ENCODE measurements at regions of chr7 and their contacts with region 1.

Region 1: GRCh38 chr7:65006094-65006992 is at the start of gene ERV3-1:
- DNase-seq: peak; percentile 81 to 96
- ATAC-seq: peak; percentile 100
- H3K4me3 ChIP-seq: peak within 1 kb of the TSS; percentile 74
- H3K27ac ChIP-seq: peak within 1 kb of the TSS; percentile 83 to 92
- H3K4me1 ChIP-seq: no peaks in the 10 kb centered on the region
- CTCF ChIP-seq: no peak
- EP300 ChIP-seq: no peak
- POLR2A ChIP-seq: peak; percentile 76
- RAD21 ChIP-seq: no peak
- polyA plus RNA-seq, gene ERV3-1: 5.7 and 5.8 TPM in 2 replicates

Region 2: DNA sequence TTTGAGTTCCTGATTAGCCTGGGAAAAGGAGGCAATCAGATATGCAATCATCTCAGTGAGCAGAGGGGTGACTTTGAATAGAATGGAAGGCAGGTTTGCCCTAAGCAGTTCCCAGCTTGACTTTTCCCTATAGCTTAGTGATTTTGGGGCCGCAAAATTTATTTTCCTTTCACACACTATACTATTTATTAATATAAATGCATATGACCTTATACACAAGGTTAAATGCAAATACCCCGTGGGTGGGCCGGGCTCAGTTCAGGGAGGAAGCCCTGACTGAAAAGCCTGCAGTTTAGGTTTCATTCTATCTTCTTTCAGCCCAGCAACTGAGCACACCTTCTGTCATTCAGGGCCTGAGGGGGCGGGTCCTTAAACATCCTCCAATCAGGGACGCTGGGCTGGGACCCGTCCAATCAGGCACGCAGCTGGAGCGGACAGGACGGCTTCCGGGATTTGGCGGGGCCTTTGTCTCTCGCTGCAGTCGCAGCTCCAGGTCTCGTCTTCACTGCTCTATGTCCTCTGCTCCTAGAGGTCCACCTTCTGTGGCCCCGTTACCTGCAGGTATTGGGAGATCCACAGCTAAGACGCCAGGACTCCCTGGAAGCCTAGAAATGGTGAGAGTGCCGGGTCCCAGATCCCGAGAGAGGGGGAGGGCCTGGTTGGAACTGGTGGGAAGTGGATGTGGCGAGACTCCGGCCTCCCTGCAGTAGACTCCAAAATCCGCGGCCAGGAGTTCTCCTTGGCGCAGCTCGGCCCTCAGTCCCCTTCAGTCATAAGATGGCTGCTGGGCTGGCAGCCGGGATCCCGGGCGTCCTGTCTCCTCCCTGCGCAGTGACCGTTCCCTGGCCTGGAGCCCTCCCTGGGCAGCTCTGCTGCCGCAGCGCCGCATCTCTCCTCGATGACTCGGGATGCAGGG is 103.3 kb before region 1 on chr7 and contains the start of gene ZNF273:
- CTCF ChIA-PET with region 1: no interaction called
- POLR2A ChIA-PET with region 1: interaction called, 10 read pairs
- DNase-seq: peak; percentile 78 to 92
- ATAC-seq: peak; percentile 99 to 100
- H3K4me3 ChIP-seq: peak within 1 kb of the TSS; percentile 97
- H3K27ac ChIP-seq: peak within 1 kb of the TSS; percentile 71 to 88
- H3K4me1 ChIP-seq: no peaks in the 10 kb centered on the region
- CTCF ChIP-seq: no peak
- EP300 ChIP-seq: no peak
- POLR2A ChIP-seq: peak; percentile 35; the same call in 1 of the 2 replicates
- RAD21 ChIP-seq: no peak
- polyA plus RNA-seq, gene ZNF273: 5.2 TPM in 2 replicates

Region 3: DNA sequence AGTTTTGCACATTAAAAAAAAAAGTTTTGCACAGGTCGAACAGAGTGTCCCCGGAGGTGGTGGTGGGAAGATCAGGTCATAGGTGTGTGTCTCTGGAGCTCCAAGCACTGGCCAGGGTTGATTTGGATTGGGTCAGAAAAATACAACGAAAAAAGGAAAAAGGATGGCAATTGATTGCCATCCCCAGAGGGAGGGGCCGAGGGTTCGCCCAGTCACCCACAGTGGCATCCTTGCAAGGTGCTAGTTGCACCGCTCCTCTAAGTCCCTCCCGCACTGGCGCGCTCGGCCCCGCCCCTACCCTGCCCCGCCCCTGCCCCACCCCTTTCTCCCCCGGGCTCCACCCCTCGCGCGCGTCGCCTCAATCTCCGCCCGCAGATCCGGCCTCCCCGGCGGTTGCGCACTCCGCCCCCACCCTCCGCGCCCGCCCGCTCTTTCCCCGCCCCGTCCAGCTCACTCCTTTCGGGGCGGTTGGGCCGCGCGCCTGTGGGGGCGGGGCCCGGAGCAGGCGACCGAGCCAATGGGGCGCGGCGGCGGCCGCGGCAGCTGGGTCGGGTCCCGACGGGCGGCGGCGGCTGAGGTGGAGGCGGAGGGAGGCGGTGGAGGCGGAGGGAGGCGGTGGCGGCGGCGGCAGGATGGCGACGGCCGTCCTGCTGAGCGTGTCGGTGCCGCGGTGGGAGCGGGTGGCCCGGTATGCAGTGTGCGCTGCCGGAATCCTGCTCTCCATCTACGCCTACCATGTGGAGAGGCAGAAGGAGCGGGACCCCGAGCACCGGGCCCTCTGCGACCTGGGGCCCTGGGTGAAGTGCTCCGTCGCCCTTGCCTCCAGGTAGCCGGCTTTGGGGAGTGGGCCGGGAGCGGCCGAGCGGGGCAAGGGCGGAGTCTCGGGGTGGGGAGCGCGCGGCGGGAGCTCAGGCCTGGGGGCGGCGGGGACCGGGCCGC is 31.7 kb after region 1 on chr7:
- CTCF ChIA-PET with region 1: no interaction called
- POLR2A ChIA-PET with region 1: interaction called, 29 read pairs
- DNase-seq: peak; percentile 45 to 93
- ATAC-seq: peak; percentile 92 to 94
- H3K4me3 ChIP-seq: peak overlapping the region; percentile 54
- H3K27ac ChIP-seq: peak overlapping the region; percentile 83 to 98
- H3K4me1 ChIP-seq: peaks cover 10% of the 10 kb centered on the region
- CTCF ChIP-seq: no peak
- EP300 ChIP-seq: no peak
- POLR2A ChIP-seq: peak; percentile 93
- RAD21 ChIP-seq: no peak

Region 4: DNA sequence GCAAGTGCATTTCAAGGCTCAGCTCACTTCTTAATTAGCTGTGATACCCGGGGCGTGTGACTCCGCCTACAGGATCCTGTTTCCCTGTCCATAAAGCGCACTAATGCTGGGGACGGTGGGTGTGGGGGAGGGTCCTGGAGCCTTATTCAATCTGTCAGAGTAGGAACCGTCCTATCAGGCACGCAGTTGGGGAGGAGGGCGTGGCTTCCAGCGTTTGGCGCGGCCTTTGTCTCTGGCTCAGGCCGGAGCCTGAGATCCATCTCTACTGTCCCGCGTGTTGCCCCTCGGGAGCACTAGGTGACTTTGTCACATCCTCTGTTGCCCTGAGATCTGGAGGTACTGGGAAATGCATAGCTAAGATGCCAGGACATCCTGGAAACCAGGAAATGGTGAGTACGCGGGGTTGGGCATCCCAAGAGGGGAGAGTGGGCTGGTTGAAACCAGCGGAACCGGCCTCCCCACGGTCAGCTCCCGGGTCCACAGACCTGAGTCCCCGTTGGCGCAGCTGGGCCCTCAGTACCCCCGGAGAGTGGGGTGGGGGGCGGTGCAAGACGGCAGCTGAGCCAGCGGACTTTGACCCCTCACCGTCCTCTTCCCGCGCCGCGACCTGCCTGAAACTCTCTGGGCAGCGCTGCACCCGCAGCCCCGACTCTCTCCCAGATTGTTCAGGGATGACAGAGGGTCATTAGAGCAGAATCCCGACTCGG is 263.0 kb after region 1 on chr7:
- CTCF ChIA-PET with region 1: no interaction called
- POLR2A ChIA-PET with region 1: no interaction called
- DNase-seq: peak; percentile 91 to 97
- ATAC-seq: peak; percentile 96 to 100
- H3K4me3 ChIP-seq: peak overlapping the region; percentile 79
- H3K27ac ChIP-seq: peak overlapping the region; percentile 56 to 77
- H3K4me1 ChIP-seq: peaks cover 5% of the 10 kb centered on the region; the same call in 1 of the 3 replicates
- CTCF ChIP-seq: no peak
- EP300 ChIP-seq: no peak
- POLR2A ChIP-seq: 0 out of 2 replicates have a peak, but pooled peaks have one; percentile 27
- RAD21 ChIP-seq: no peak